ENCODE measurements at regions of chr1 and their contacts with region 1.

Region 1: GRCh38 chr1:188092826-188093225 is 1264.1 kb downstream of the PLA2G4A start:
- DNase-seq: no peak
- H3K4me3 ChIP-seq: no peak overlapping the region
- H3K27ac ChIP-seq: no peak overlapping the region
- H3K4me1 ChIP-seq: no peaks in the 10 kb centered on the region
- H3K27me3 ChIP-seq: no peaks in the 10 kb centered on the region
- CTCF ChIP-seq: no peak
- EP300 ChIP-seq: no peak
- POLR2A ChIP-seq: no peak

Region 2: DNA sequence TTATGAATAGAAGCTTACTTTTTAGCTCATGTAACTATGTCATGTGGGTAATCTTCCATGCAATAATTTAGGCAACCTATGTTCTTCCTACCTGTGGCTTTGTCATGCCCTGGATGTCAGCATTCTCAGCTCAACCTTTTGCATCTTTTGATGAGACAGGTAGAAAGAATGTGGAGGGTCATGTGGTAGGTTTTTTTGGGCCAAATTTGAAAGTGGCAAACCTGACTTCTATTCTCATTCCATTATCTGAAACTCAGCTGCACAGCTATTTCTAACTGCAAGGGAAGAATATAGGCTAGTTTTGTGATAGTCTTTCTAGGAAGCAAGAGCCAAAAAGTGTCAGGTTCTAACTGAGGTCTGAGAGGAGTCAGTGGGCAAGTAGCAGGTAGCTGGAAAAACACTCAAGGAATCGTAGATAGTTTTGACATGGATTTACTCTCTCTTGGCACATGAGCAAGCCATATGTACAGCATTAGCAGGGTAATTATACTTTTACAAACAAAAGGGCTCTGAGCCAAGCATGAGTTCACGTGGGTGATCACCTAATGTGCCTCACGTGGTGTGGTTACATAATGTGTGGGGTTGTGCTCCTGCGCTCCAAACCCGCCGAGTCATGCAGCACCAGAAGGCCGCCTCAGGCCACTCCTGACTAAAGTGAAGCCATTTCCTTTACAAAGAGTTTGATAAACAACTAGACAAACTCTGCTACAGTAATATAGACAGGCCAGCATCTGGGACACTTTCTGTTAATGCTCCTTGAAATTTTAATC is 250.2 kb before region 1 on chr1:
- in situ Hi-C with region 1: no loop called
- intact Hi-C with region 1: no loop called
- DNase-seq: no peak
- H3K4me3 ChIP-seq: no peak overlapping the region
- H3K27ac ChIP-seq: no peak overlapping the region
- H3K4me1 ChIP-seq: no peaks in the 10 kb centered on the region
- H3K27me3 ChIP-seq: no peaks in the 10 kb centered on the region
- CTCF ChIP-seq: no peak
- EP300 ChIP-seq: no peak
- POLR2A ChIP-seq: no peak

Region 3: GRCh38 chr1:188857526-188858087 is 764.8 kb after region 1 on chr1:
- in situ Hi-C with region 1: no loop called
- intact Hi-C with region 1: loop called (anchors 5 kb)
- DNase-seq: no peak
- H3K4me3 ChIP-seq: no peak overlapping the region
- H3K27ac ChIP-seq: no peak overlapping the region
- H3K4me1 ChIP-seq: no peaks in the 10 kb centered on the region
- H3K27me3 ChIP-seq: no peaks in the 10 kb centered on the region
- CTCF ChIP-seq: no peak
- EP300 ChIP-seq: no peak
- POLR2A ChIP-seq: no peak

Measured in transverse colon (tissue), 4 donors.